Ovary (tissue), 10 donors: ENCODE measurements at regions of chr7 and their contacts with region 1.

Region 1: DNA sequence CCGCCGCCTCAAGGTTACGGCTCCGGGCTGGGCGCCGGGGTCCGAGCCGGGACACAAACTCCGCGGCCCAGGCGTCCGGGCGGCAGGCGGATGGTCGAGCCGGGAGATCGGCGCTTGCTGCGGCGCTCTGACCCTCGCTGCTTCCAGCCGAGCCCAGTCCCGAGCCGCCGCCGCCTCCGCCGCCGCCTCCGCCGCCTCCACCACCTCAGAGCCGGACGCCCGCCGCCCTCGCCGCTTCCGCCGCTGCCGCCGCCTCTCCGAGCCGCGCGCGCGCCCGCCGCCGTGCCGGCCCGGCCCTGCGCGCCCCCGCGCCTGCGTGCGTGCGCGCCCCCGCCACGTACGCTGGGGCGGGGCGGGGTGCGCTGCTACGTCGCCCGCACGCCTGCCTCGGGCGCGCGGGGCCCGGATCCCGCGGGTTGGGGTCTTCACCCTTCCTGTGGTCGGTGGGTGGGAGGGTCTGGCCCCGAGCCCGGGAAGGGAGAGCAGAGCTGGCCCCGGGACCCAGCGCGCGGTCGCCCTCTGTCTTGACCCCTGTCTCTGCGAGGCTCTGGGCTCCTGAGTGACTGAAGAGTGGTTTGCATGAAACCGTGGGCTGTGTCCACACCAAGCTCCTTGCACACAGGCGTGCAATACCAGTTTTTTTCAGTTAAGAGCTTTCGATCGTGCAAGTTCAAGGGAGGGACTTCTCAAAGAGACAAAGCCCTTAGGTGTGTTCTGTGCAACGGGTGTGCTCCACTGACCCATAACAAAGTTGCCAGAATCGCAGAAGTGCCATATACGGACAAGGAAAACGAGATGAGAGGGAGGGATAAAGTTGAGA is at the start of gene SMURF1:
- DNase-seq: peak; percentile 71 to 89 (median 87)
- H3K4me3 ChIP-seq: peak within 1 kb of the TSS; percentile 99
- H3K27ac ChIP-seq: peak within 1 kb of the TSS; percentile 97 to 98
- H3K4me1 ChIP-seq: peaks cover 5% of the 10 kb centered on the region
- H3K27me3 ChIP-seq: no peaks in the 10 kb centered on the region
- CTCF ChIP-seq: no peak
- EP300 ChIP-seq: no peak
- POLR2A ChIP-seq: peak; percentile 44
- total RNA-seq, gene SMURF1: 21.9 to 40.3 (median 29.2) TPM

Region 2: DNA sequence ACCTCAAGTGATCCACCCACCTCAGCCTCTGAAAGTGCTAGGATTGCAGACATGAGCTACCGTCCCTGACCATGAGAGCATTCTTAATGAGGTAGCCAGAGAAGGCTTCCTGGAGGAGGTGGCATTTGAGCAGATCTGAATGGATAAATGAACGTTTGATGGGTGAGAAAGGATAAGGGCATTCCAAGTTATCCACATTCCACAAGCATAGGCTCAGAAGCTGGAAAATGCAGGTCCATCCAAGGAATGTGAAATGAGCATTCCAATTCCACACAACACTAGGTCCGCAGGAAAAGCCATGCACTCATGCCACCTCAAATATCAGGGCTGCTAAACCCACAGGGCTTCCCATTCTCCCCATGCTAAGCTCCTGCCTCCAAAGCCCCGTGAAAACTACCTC is 291.2 kb before region 1 on chr7:
- intact Hi-C with region 1: no loop called
- DNase-seq: no peak
- H3K4me3 ChIP-seq: no peak overlapping the region
- H3K27ac ChIP-seq: no peak overlapping the region
- H3K4me1 ChIP-seq: no peaks in the 10 kb centered on the region
- H3K27me3 ChIP-seq: no peaks in the 10 kb centered on the region
- CTCF ChIP-seq: no peak
- EP300 ChIP-seq: no peak
- POLR2A ChIP-seq: no peak

Region 3: GRCh38 chr7:99040104-99040958 is 103.7 kb before region 1 on chr7:
- intact Hi-C with region 1: loop called (anchors 5 kb)
- DNase-seq: peak; percentile 80 to 89 (median 85)
- H3K4me3 ChIP-seq: no peak overlapping the region
- H3K27ac ChIP-seq: peak overlapping the region in 1 of 2 donors; percentile 20
- H3K4me1 ChIP-seq: no peaks in the 10 kb centered on the region
- H3K27me3 ChIP-seq: no peaks in the 10 kb centered on the region
- CTCF ChIP-seq: peak; percentile 54 to 83 (median 82)
- EP300 ChIP-seq: no peak
- POLR2A ChIP-seq: no peak

Region 4: GRCh38 chr7:99046722-99047121 is 97.3 kb before region 1 on chr7:
- intact Hi-C with region 1: loop called in 3 of 4 experiments (anchors 5 kb)
- DNase-seq: no peak
- H3K4me3 ChIP-seq: no peak overlapping the region
- H3K27ac ChIP-seq: no peak overlapping the region
- H3K4me1 ChIP-seq: no peaks in the 10 kb centered on the region
- H3K27me3 ChIP-seq: no peaks in the 10 kb centered on the region
- CTCF ChIP-seq: no peak
- EP300 ChIP-seq: no peak
- POLR2A ChIP-seq: no peak

Region 5: GRCh38 chr7:99098824-99099498 is 45.1 kb before region 1 on chr7:
- intact Hi-C with region 1: loop called in 1 of 4 experiments (anchors 5 kb)
- DNase-seq: no peak
- H3K4me3 ChIP-seq: no peak overlapping the region
- H3K27ac ChIP-seq: no peak overlapping the region
- H3K4me1 ChIP-seq: peaks cover 13% of the 10 kb centered on the region
- H3K27me3 ChIP-seq: no peaks in the 10 kb centered on the region
- CTCF ChIP-seq: no peak
- EP300 ChIP-seq: no peak
- POLR2A ChIP-seq: no peak

Region 6: GRCh38 chr7:99392677-99393354 is 248.8 kb after region 1 on chr7:
- intact Hi-C with region 1: loop called in 2 of 4 experiments (anchors 10 kb)
- DNase-seq: peak; percentile 75 to 87 (median 80)
- H3K4me3 ChIP-seq: peak overlapping the region; percentile 45
- H3K27ac ChIP-seq: peak overlapping the region in 1 of 2 donors; percentile 36
- H3K4me1 ChIP-seq: peaks cover 3% of the 10 kb centered on the region
- H3K27me3 ChIP-seq: no peaks in the 10 kb centered on the region
- CTCF ChIP-seq: no peak
- EP300 ChIP-seq: no peak
- POLR2A ChIP-seq: no peak